Activated CD4-positive, alpha-beta memory T cell treated with anti-CD3 and anti-CD28 coated beads for 36 hours (primary cell): ENCODE measurements at regions of chr1 and their contacts with region 1.

Region 1: DNA sequence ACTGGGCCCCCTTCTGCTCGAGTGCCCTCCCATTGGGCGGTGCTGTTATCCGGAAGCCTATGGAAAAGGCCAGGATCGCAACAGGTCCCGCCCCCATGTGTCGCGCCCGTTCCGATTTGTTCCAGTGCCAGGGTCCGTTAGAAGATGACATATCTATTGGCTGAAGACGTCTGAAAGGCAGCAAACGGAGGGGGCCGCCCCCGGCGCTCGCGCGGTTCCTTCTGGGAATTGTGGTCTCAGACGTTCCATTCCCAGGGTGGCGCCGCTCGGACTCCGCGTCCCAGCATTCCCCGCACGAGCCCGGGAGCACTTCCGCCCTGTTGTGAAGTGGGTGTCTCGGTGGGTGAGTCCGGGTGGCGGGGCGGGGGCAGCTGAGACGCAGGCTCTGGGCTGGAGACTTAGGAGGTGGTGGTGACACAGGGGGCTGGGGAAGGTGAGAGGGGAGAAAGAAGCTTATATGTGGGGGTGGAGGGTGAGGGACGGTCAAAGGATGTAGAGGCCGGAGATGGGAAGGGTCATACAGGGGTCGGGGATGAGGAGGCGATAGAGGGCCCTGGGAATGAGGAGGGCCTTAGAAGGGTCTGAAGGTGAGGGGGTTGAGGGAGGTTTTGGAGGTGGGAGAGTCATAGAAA is at the start of gene ZSCAN20:
- DNase-seq: peak; percentile 95
- H3K4me3 Mint-ChIP-seq: peak within 1 kb of the TSS; percentile 83
- H3K27ac Mint-ChIP-seq: peak within 1 kb of the TSS; percentile 77
- H3K4me1 Mint-ChIP-seq: peaks cover 27% of the 10 kb centered on the region
- H3K27me3 Mint-ChIP-seq: no peaks in the 10 kb centered on the region
- total RNA-seq, gene ZSCAN20: 3.8 to 4.1 TPM

Region 2: GRCh38 chr1:33094971-33095604 is 377.4 kb before region 1 on chr1:
- CTCF ChIA-PET with region 1: interaction called, 4 read pairs
- POLR2A ChIA-PET with region 1: no interaction called
- intact Hi-C with region 1: loop called (anchors 2 kb)
- DNase-seq: peak; percentile 28
- H3K4me3 Mint-ChIP-seq: no peak overlapping the region
- H3K27ac Mint-ChIP-seq: no peak overlapping the region
- H3K4me1 Mint-ChIP-seq: peaks cover 28% of the 10 kb centered on the region
- H3K27me3 Mint-ChIP-seq: no peaks in the 10 kb centered on the region

Region 3: GRCh38 chr1:33349778-33350610 is 122.5 kb before region 1 on chr1:
- CTCF ChIA-PET with region 1: no interaction called
- POLR2A ChIA-PET with region 1: interaction called, 4 read pairs
- intact Hi-C with region 1: loop called (anchors 2 kb)
- DNase-seq: peak; percentile 84
- H3K4me3 Mint-ChIP-seq: peak overlapping the region; percentile 91
- H3K27ac Mint-ChIP-seq: peak overlapping the region; percentile 94
- H3K4me1 Mint-ChIP-seq: peaks cover 46% of the 10 kb centered on the region
- H3K27me3 Mint-ChIP-seq: no peaks in the 10 kb centered on the region

Region 4: GRCh38 chr1:33367485-33368405 is 104.7 kb before region 1 on chr1:
- CTCF ChIA-PET with region 1: interaction called, 8 read pairs
- POLR2A ChIA-PET with region 1: no interaction called
- intact Hi-C with region 1: loop called (anchors 5 kb)
- DNase-seq: peak; percentile 88
- H3K4me3 Mint-ChIP-seq: no peak overlapping the region
- H3K27ac Mint-ChIP-seq: no peak overlapping the region
- H3K4me1 Mint-ChIP-seq: no peaks in the 10 kb centered on the region
- H3K27me3 Mint-ChIP-seq: no peaks in the 10 kb centered on the region

Region 5: DNA sequence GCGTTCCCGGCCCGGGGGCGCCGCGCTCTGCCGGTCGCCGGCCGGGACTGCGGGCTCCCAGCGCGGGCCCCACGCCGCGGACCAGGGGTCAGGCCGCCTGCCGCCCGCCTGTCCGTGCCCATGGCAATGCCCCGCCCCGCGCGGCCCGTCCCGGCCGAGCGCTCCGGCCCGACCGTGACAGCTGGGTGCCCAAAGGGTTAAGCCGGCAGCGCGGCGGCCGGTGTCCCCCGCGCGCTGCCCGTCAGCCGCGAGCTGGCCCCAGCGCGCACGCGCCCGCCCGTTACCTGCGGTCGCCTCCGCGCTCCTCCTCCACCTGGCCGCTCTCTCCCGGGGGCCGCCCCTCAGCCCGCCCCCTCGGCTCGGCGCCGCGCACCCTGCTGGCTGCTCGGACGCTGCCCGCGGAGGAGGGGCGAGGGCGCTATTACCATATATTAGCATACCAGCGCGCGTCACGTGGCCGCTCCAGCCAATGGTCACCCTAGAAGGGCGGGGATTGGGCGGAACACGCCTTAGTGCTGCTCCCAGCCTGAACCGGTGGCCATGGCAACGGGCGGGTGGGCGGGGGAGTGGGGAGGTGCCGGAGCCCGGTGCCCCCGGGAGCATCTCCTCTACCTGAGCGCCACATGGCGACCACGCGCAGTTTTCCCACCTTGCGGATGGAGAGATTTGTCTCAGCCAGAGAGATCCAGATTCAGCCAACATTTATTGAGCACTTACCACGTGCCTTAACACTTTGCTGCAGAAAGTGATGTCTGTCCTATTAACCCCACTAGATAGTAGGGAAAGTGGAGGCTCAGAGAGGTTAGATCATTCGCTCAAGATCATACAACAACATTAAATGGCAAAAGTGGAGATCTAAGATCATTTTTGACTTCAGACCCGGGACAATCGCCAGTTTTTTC is 41.5 kb before region 1 on chr1 and contains the start of gene PHC2:
- CTCF ChIA-PET with region 1: interaction called, 3 read pairs
- POLR2A ChIA-PET with region 1: no interaction called
- intact Hi-C with region 1: loop called (anchors 1 kb)
- DNase-seq: peak; percentile 95
- H3K4me3 Mint-ChIP-seq: peak within 1 kb of the TSS; percentile 40
- H3K27ac Mint-ChIP-seq: no peak within 1 kb of the TSS
- H3K4me1 Mint-ChIP-seq: peaks cover 7% of the 10 kb centered on the region
- H3K27me3 Mint-ChIP-seq: peaks cover 2% of the 10 kb centered on the region
- total RNA-seq, gene PHC2: 21.4 to 22.5 TPM

Region 6: GRCh38 chr1:33455539-33456501 is 16.6 kb before region 1 on chr1:
- CTCF ChIA-PET with region 1: interaction called, 10 read pairs
- POLR2A ChIA-PET with region 1: no interaction called
- intact Hi-C with region 1: no loop called
- DNase-seq: peak; percentile 59
- H3K4me3 Mint-ChIP-seq: no peak overlapping the region
- H3K27ac Mint-ChIP-seq: no peak overlapping the region
- H3K4me1 Mint-ChIP-seq: peaks cover 3% of the 10 kb centered on the region
- H3K27me3 Mint-ChIP-seq: peaks cover 11% of the 10 kb centered on the region

Region 7: DNA sequence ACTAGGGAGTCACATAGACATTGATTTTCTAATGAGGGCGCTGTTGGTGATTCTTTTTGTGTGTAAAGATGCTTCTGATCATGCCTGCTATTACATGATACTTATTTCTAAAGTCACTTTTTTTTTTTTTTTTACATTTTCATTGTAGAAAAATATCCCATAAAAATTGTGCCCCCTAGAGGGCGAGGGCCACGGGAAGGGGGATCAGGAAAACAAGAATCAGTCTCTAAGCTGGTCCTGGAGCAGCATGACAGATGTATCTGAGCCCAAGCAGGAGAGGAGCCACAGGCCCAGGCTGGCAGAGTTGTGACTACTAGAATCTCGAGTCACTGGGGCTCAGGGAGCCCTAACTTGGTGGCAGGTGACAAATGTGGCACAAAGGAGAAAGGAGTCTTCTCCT is 28.1 kb after region 1 on chr1:
- CTCF ChIA-PET with region 1: no interaction called
- POLR2A ChIA-PET with region 1: no interaction called
- intact Hi-C with region 1: no loop called
- DNase-seq: no peak
- H3K4me3 Mint-ChIP-seq: no peak overlapping the region
- H3K27ac Mint-ChIP-seq: no peak overlapping the region
- H3K4me1 Mint-ChIP-seq: no peaks in the 10 kb centered on the region
- H3K27me3 Mint-ChIP-seq: no peaks in the 10 kb centered on the region

Region 8: GRCh38 chr1:33698361-33699035 is 226.0 kb after region 1 on chr1:
- CTCF ChIA-PET with region 1: no interaction called
- POLR2A ChIA-PET with region 1: no interaction called
- intact Hi-C with region 1: no loop called
- DNase-seq: no peak
- H3K4me3 Mint-ChIP-seq: no peak overlapping the region
- H3K27ac Mint-ChIP-seq: no peak overlapping the region
- H3K4me1 Mint-ChIP-seq: no peaks in the 10 kb centered on the region
- H3K27me3 Mint-ChIP-seq: peaks cover 8% of the 10 kb centered on the region